Activated CD4-positive, alpha-beta T cell treated with anti-CD3 and anti-CD28 coated beads, Interleukin-2, amount 10 ng/mL, durations not matched to agents 24 days and 14 days (primary cell): ENCODE measurements at regions of chr17 and their contacts with region 1.

Region 1: GRCh38 chr17:58006924-58007780 is at the start of gene SRSF1:
- DNase-seq: peak; percentile 99
- H3K4me3 Mint-ChIP-seq: peak within 1 kb of the TSS; percentile 97
- H3K27ac Mint-ChIP-seq: peak within 1 kb of the TSS; percentile 99
- H3K4me1 Mint-ChIP-seq: peaks cover 38% of the 10 kb centered on the region
- H3K27me3 Mint-ChIP-seq: no peaks in the 10 kb centered on the region
- total RNA-seq, gene SRSF1: 510 and 515 TPM in 2 replicates

Region 2: DNA sequence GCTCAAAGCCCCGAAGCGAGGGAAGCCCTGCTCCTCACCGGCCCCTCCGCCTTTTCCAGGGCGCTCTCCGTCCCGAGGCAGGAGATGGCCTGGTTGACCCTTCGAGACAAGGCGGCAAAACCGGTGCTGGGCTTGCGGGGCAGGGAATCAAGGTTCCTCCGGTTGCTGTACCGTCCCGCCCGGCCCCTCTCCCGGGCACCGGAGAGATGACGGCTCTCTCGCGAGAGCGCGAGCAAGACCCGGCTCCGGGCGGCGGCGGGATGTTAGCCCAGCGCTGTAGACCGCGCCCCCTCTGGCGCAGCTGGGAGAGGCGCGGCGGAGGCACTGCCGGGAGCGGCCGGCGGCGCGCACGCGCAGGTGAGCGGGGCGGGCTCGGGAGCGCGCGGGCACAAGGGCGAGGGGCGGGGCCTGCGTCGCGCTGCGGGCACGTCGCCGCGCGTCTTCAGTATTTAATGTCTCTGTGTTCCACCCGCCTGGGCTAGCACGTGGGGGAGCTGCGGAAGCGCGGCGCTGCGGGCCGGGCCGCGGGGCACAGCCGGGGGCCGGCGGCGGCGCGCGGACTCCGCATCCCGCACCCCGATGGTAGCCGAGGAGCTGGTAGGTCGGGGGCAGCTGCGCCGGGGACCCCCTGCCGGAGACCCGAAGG is 922.2 kb before region 1 on chr17 and contains the start of gene AKAP1:
- intact Hi-C with region 1: loop called (anchors 2 kb)
- DNase-seq: peak; percentile 99
- H3K4me3 Mint-ChIP-seq: peak within 1 kb of the TSS; percentile 93
- H3K27ac Mint-ChIP-seq: peak within 1 kb of the TSS; percentile 92
- H3K4me1 Mint-ChIP-seq: peaks cover 45% of the 10 kb centered on the region
- H3K27me3 Mint-ChIP-seq: peaks cover 10% of the 10 kb centered on the region
- total RNA-seq, gene AKAP1: 54.6 and 56.8 TPM in 2 replicates

Region 3: DNA sequence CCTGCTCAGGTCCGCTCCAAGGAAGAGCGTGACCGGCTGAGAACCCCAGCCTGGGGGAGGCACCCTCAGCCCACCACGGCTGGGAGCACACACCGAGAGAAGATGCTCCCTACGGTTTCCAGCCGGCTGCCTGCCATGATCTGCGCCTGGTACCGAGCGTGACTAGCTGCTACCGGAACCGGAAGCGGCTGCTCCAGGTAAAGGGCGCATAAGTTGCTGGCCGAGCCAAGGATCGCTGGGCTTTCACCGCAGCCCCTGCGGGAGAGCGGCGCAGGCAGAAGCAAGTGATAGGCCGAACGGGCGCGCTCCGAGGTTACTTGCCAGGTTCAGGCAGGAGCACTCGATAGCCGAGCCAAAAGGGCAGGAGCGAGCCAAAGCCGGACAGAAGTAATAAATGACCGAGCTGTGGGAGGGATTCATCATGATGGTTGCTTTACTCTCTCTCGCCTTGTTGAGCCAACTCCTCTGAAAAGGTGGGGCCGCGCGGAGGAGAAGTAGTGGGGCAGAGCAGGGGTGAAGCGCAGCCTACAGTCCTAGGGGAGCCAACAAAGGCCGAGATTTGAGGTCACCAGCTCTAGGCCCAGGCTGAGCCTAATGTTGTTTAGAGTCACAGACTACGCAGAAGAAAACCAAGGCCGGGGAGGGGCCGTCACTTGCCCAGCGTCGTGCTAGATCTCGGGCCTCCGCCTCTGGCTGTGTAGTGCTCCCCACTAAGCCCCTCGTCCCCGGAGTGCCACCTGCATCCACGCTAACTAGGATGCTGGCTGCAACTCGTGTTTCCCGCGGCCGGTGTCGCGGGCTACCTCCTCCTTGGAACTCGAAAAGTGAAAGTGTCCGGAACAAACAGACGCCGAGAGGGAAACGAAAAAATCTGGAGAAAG is 157.0 kb before region 1 on chr17 and contains the start of gene MRPS23:
- intact Hi-C with region 1: loop called (anchors 1 kb)
- DNase-seq: peak; percentile 99
- H3K4me3 Mint-ChIP-seq: peak within 1 kb of the TSS; percentile 97
- H3K27ac Mint-ChIP-seq: peak within 1 kb of the TSS; percentile 97
- H3K4me1 Mint-ChIP-seq: peaks cover 28% of the 10 kb centered on the region
- H3K27me3 Mint-ChIP-seq: no peaks in the 10 kb centered on the region
- total RNA-seq, gene MRPS23: 83.3 and 84.8 TPM in 2 replicates

Region 4: GRCh38 chr17:57987580-57988421 is 19.4 kb before region 1 on chr17 and contains the start of gene VEZF1:
- intact Hi-C with region 1: loop called (anchors 1 kb)
- DNase-seq: peak; percentile 93
- H3K4me3 Mint-ChIP-seq: peak within 1 kb of the TSS; percentile 94
- H3K27ac Mint-ChIP-seq: peak within 1 kb of the TSS; percentile 96
- H3K4me1 Mint-ChIP-seq: peaks cover 47% of the 10 kb centered on the region
- H3K27me3 Mint-ChIP-seq: no peaks in the 10 kb centered on the region
- total RNA-seq, gene VEZF1: 35.4 and 37.3 TPM in 2 replicates

Region 5: GRCh38 chr17:58082870-58083490 is 75.8 kb after region 1 on chr17 and contains the start of gene DYNLL2:
- intact Hi-C with region 1: loop called (anchors 1 kb)
- DNase-seq: peak; percentile 95
- H3K4me3 Mint-ChIP-seq: peak within 1 kb of the TSS; percentile 88
- H3K27ac Mint-ChIP-seq: peak within 1 kb of the TSS; percentile 80
- H3K4me1 Mint-ChIP-seq: peaks cover 26% of the 10 kb centered on the region
- H3K27me3 Mint-ChIP-seq: peaks cover 20% of the 10 kb centered on the region
- total RNA-seq, gene DYNLL2: 36.6 and 37.2 TPM in 2 replicates

Region 6: DNA sequence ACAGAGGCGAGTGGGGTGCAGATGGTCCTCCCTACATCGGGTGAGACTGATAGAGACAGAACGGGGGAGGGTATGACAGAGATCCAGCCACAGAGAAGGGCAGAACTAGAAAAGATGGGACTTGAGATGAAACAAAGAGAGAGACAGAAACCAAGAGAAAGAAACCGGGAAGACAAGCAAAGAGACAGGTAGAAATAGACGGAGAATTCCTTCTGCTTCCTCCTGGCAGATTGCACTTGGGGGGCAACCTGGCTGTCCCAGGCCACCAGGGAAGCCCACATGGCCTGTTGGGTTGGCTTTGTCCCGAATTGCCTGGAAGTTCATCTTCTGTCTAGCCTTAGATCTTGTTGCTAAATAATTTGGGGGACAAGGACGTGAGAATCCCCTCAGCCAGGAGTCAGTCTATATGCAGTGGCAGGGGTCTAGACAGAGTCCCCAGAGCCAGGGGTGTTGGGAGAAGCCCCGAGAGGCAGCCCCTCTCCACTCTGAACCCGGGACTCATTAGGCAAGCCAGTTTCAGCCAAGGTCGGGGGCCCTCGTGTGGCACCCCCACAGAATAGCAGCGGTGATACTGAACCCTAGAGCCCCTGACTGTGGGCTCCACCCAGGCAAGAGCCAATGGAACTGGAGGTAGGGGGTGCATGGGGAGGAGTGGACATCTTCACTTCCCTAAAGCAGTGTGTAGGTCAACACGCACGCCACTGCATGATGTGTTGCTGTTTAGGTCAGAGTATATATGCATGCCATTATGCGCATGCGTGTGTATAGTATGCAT is 322.1 kb after region 1 on chr17:
- intact Hi-C with region 1: loop called (anchors 2 kb)
- DNase-seq: peak; percentile 95
- H3K4me3 Mint-ChIP-seq: peak overlapping the region; percentile 91
- H3K27ac Mint-ChIP-seq: peak overlapping the region; percentile 96
- H3K4me1 Mint-ChIP-seq: peaks cover 45% of the 10 kb centered on the region
- H3K27me3 Mint-ChIP-seq: peaks cover 4% of the 10 kb centered on the region

Region 7: DNA sequence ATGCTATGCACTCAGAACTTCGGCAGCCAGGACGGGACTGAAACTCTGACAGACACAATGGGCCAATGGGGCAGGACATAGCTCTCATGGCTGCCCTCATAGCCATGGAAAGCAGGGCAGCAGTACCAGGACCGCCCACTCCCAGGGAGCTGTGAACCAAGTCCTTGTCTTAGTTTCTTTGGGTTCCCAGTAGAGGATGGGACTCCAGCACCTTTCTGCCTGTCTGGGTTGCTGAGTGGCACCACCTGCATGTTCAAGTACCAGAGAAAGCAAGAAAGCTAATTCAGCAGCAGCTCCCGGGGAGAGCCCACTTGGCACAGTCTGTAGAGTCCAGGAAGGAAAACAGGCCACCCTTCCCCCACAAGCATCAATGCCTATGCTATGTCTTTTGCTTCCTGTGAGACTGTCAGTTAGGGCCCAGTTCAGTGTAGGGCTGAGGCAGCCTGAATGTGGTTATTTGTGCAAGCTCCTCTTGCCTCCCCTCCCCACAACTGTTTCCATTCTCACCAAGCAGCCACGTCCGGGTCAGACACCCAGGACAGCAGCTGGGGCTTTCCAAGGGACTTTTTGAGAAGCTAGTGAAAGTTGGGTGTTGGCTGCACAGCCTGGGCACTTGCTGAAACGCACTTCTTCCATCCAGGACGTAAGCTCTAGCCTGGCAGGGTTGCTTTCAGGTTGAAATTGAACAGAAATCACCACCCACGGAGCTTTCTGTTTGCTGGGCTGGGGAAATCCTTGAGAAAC is 337.1 kb after region 1 on chr17:
- intact Hi-C with region 1: loop called (anchors 2 kb)
- DNase-seq: peak; percentile 97
- H3K4me3 Mint-ChIP-seq: peak overlapping the region; percentile 91
- H3K27ac Mint-ChIP-seq: peak overlapping the region; percentile 100
- H3K4me1 Mint-ChIP-seq: peaks cover 72% of the 10 kb centered on the region
- H3K27me3 Mint-ChIP-seq: no peaks in the 10 kb centered on the region